ENCODE measurements at regions of chr17 and their contacts with region 1.

Region 1: GRCh38 chr17:52594516-52594915 is 436.0 kb upstream of the CA10 start:
- DNase-seq: no peak
- H3K4me3 ChIP-seq: no peak overlapping the region
- H3K27ac ChIP-seq: no peak overlapping the region
- H3K4me1 ChIP-seq: no peaks in the 10 kb centered on the region
- H3K27me3 ChIP-seq: no peaks in the 10 kb centered on the region
- CTCF ChIP-seq: no peak
- EP300 ChIP-seq: no peak
- POLR2A ChIP-seq: no peak

Region 2: DNA sequence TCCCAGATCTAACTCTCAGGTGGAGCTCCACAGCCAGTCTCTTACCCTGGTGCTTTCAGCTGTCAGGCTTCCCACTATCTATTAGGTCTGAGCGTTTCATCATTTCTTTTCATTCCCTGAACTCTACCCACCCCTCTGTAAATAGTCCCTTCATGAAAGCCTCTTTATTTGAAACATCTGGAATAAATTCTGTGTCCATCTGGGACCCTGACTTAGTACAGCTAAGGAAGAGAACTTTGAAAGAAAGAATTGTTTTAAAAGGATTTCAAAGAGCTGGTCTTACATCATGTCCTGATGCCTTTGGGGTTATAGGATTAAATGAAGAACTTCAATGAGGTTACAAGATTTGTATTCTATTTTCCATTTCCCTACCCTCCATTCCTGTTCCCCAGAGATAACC is 47.5 kb before region 1 on chr17:
- in situ Hi-C with region 1: loop called in 1 of 4 experiments (anchors 10 kb)
- intact Hi-C with region 1: no loop called
- DNase-seq: no peak
- H3K4me3 ChIP-seq: no peak overlapping the region
- H3K27ac ChIP-seq: no peak overlapping the region
- H3K4me1 ChIP-seq: no peaks in the 10 kb centered on the region
- H3K27me3 ChIP-seq: no peaks in the 10 kb centered on the region
- CTCF ChIP-seq: no peak
- EP300 ChIP-seq: no peak
- POLR2A ChIP-seq: no peak